PC-9 (cell line): ENCODE measurements at regions of chr3 and their contacts with region 1.

Region 1: GRCh38 chr3:168878655-168879054 is 782.9 kb upstream of the GOLIM4 start:
- DNase-seq: peak in 1 of 2 experiments; percentile 65
- H3K4me3 ChIP-seq: no peak overlapping the region
- H3K27ac ChIP-seq: peak overlapping the region; percentile 61
- H3K4me1 ChIP-seq: peaks cover 34% of the 10 kb centered on the region
- H3K27me3 ChIP-seq: no peaks in the 10 kb centered on the region
- CTCF ChIP-seq: no peak

Region 2: DNA sequence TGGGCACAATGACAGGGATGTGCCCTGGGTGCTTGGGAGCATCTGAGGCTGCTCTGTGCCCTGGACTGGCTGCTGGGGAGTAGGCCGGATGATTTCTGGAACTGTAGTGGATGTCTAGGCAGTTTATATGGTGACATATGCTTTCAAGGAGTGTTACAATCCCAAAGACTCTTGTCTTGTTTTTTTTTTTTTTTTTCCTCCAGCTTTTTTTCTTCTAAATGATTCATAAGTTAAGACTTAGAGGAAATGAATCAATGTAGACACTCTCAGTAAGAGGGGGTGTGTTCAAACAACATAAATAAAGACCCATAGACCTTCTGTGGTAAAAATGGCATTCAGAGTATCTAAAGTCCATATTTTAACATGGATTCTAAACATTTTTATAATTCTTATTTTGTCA is 76.9 kb before region 1 on chr3:
- CTCF ChIA-PET with region 1: no interaction called
- POLR2A ChIA-PET with region 1: no interaction called
- intact Hi-C with region 1: loop called (anchors 2 kb)
- DNase-seq: peak; percentile 8 to 48
- H3K4me3 ChIP-seq: no peak overlapping the region; the same call in 1 of the 2 replicates
- H3K27ac ChIP-seq: no peak overlapping the region
- H3K4me1 ChIP-seq: peaks cover 15% of the 10 kb centered on the region
- H3K27me3 ChIP-seq: no peaks in the 10 kb centered on the region
- CTCF ChIP-seq: no peak

Region 3: GRCh38 chr3:169085827-169086226 is 207.2 kb after region 1 on chr3:
- CTCF ChIA-PET with region 1: no interaction called
- POLR2A ChIA-PET with region 1: no interaction called
- intact Hi-C with region 1: loop called (anchors 5 kb)
- DNase-seq: peak; percentile 31 to 79
- H3K4me3 ChIP-seq: no peak overlapping the region
- H3K27ac ChIP-seq: peak overlapping the region; percentile 16; the same call in 1 of the 2 replicates
- H3K4me1 ChIP-seq: peaks cover 14% of the 10 kb centered on the region; the same call in 1 of the 2 replicates
- H3K27me3 ChIP-seq: no peaks in the 10 kb centered on the region
- CTCF ChIP-seq: no peak

Region 4: DNA sequence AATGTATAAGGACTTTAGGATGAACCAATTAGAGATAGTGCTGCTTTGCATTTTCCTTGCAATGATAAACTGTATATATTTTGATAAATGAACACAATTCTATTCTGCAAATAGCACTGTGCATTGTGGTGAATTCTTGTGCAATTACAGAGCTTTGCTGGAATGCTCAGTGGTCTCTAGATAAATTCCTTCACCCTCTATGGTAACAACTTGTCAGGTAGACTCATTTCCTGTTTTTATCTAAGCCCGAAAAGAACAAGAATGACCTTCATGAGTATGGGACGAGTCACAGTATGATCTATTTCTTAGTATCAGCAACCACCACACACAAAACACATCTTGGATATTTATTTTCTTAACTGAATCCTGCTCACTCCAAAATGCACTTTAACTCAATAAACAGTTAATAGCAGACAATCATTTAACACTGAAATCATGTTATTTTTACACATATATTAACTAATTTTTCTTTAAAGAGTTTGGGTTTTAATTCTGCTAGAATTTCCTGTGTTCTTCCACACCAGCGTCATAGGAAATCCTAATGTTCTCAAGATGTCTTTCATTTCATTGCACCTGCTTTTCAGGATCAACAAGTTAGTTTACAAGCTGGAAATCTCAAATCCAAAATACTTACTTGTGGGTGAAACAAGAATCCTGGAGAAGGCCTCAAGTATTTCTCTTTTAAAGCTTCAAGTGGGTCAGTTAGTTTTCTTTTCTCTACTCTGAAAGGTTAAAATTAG is 233.7 kb after region 1 on chr3:
- CTCF ChIA-PET with region 1: no interaction called
- POLR2A ChIA-PET with region 1: no interaction called
- intact Hi-C with region 1: loop called (anchors 5 kb)
- DNase-seq: peak in 1 of 2 experiments; percentile 77
- H3K4me3 ChIP-seq: no peak overlapping the region
- H3K27ac ChIP-seq: peak overlapping the region; percentile 67
- H3K4me1 ChIP-seq: peaks cover 13% of the 10 kb centered on the region
- H3K27me3 ChIP-seq: no peaks in the 10 kb centered on the region
- CTCF ChIP-seq: no peak

Region 5: GRCh38 chr3:169348929-169349613 is 470.4 kb after region 1 on chr3:
- CTCF ChIA-PET with region 1: no interaction called
- POLR2A ChIA-PET with region 1: no interaction called
- intact Hi-C with region 1: loop called (anchors 5 kb)
- DNase-seq: peak; percentile 52 to 92
- H3K4me3 ChIP-seq: peak overlapping the region; percentile 14; the same call in 1 of the 2 replicates
- H3K27ac ChIP-seq: peak overlapping the region; percentile 95
- H3K4me1 ChIP-seq: peaks cover 51% of the 10 kb centered on the region
- H3K27me3 ChIP-seq: no peaks in the 10 kb centered on the region
- CTCF ChIP-seq: no peak